HepG2 (cell line): ENCODE measurements at regions of chr3 and their contacts with region 1.

Region 1: GRCh38 chr3:32177702-32178198 is 60.7 kb upstream of the CMTM8 start:
- DNase-seq: peak; percentile 88
- ATAC-seq: peak; percentile 97
- H3K4me3 ChIP-seq: peak overlapping the region in 2 of 3 experiments; percentile 49 to 65; a peak in 5 of 6 replicates
- H3K27ac ChIP-seq: no peak overlapping the region
- H3K4me1 ChIP-seq: peaks cover 27% of the 10 kb centered on the region
- H3K27me3 ChIP-seq: peaks cover 0 to 4% of the 10 kb centered on the region in 2 experiments; a peak in 2 of 5 replicates
- CTCF ChIP-seq: peak; percentile 98
- EP300 ChIP-seq: 0 out of 4 replicates have a peak, but pooled peaks of 1 of the 2 experiments have one; percentile 36
- POLR2A ChIP-seq: no peak
- RAD21 ChIP-seq: peak; percentile 89

Region 2: GRCh38 chr3:32045091-32045964 is 132.4 kb before region 1 on chr3:
- CTCF ChIA-PET with region 1: no interaction called
- POLR2A ChIA-PET with region 1: no interaction called
- in situ Hi-C with region 1: no loop called
- intact Hi-C with region 1: no loop called
- DNase-seq: peak; percentile 85
- ATAC-seq: peak; percentile 97
- H3K4me3 ChIP-seq: peak overlapping the region in 1 of 3 experiments; percentile 14; a peak in 1 of 6 replicates
- H3K27ac ChIP-seq: no peak overlapping the region
- H3K4me1 ChIP-seq: peaks cover 20% of the 10 kb centered on the region
- H3K27me3 ChIP-seq: peaks cover 1 to 49% of the 10 kb centered on the region in 2 experiments; a peak in 3 of 5 replicates
- CTCF ChIP-seq: no peak
- EP300 ChIP-seq: peak in 1 of 2 experiments; percentile 81; a peak in 2 of 4 replicates
- POLR2A ChIP-seq: no peak
- RAD21 ChIP-seq: no peak

Region 3: GRCh38 chr3:32216172-32216783 is 38.5 kb after region 1 on chr3:
- CTCF ChIA-PET with region 1: interaction called, 6 read pairs
- POLR2A ChIA-PET with region 1: no interaction called
- in situ Hi-C with region 1: no loop called
- intact Hi-C with region 1: loop called (anchors 1 kb)
- DNase-seq: peak; percentile 99
- ATAC-seq: peak; percentile 99
- H3K4me3 ChIP-seq: peak overlapping the region; percentile 21 to 47 (median 39); a peak in 5 of 6 replicates
- H3K27ac ChIP-seq: peak overlapping the region; percentile 86
- H3K4me1 ChIP-seq: peaks cover 49% of the 10 kb centered on the region
- H3K27me3 ChIP-seq: no peaks in the 10 kb centered on the region
- CTCF ChIP-seq: peak; percentile 11; the same call in 1 of the 2 replicates
- EP300 ChIP-seq: peak; percentile 92 to 99
- POLR2A ChIP-seq: 0 out of 4 replicates have a peak, but pooled peaks of 1 of the 2 experiments have one; percentile 33
- RAD21 ChIP-seq: peak; percentile 35; the same call in 1 of the 2 replicates

Region 4: GRCh38 chr3:32296256-32297204 is 118.8 kb after region 1 on chr3:
- CTCF ChIA-PET with region 1: interaction called, 22 read pairs
- POLR2A ChIA-PET with region 1: no interaction called
- in situ Hi-C with region 1: loop called (anchors 5 kb)
- intact Hi-C with region 1: loop called (anchors 1 kb)
- DNase-seq: peak; percentile 47
- ATAC-seq: peak; percentile 79
- H3K4me3 ChIP-seq: no peak overlapping the region
- H3K27ac ChIP-seq: no peak overlapping the region
- H3K4me1 ChIP-seq: peaks cover 38% of the 10 kb centered on the region
- H3K27me3 ChIP-seq: no peaks in the 10 kb centered on the region
- CTCF ChIP-seq: peak; percentile 91
- EP300 ChIP-seq: no peak
- POLR2A ChIP-seq: no peak
- RAD21 ChIP-seq: peak; percentile 86

Region 5: GRCh38 chr3:32340039-32340438 is 162.3 kb after region 1 on chr3:
- CTCF ChIA-PET with region 1: interaction called, 52 read pairs
- POLR2A ChIA-PET with region 1: no interaction called
- in situ Hi-C with region 1: loop called (anchors 5 kb)
- intact Hi-C with region 1: loop called (anchors 1 kb)
- DNase-seq: peak; percentile 80
- ATAC-seq: peak; percentile 94
- H3K4me3 ChIP-seq: no peak overlapping the region
- H3K27ac ChIP-seq: no peak overlapping the region
- H3K4me1 ChIP-seq: peaks cover 35% of the 10 kb centered on the region
- H3K27me3 ChIP-seq: no peaks in the 10 kb centered on the region
- CTCF ChIP-seq: peak; percentile 88
- EP300 ChIP-seq: no peak
- POLR2A ChIP-seq: no peak
- RAD21 ChIP-seq: peak; percentile 78

Region 6: GRCh38 chr3:32667122-32667521 is 489.4 kb after region 1 on chr3:
- CTCF ChIA-PET with region 1: no interaction called
- POLR2A ChIA-PET with region 1: no interaction called
- in situ Hi-C with region 1: no loop called
- intact Hi-C with region 1: loop called (anchors 10 kb)
- DNase-seq: no peak
- ATAC-seq: peak; percentile 48
- H3K4me3 ChIP-seq: no peak overlapping the region
- H3K27ac ChIP-seq: no peak overlapping the region
- H3K4me1 ChIP-seq: peaks cover 31% of the 10 kb centered on the region
- H3K27me3 ChIP-seq: peaks cover 0 to 11% of the 10 kb centered on the region in 2 experiments; a peak in 1 of 5 replicates
- CTCF ChIP-seq: no peak
- EP300 ChIP-seq: no peak
- POLR2A ChIP-seq: no peak
- RAD21 ChIP-seq: no peak